ENCODE measurements at regions of chr12 and their contacts with region 1.

Region 1: GRCh38 chr12:44317651-44318126 is 481.8 kb downstream of the TMEM117 start:
- DNase-seq: peak; percentile 81
- H3K4me3 ChIP-seq: no peak overlapping the region
- H3K27ac ChIP-seq: no peak overlapping the region
- H3K4me1 ChIP-seq: peaks cover 31% of the 10 kb centered on the region
- H3K27me3 ChIP-seq: no peaks in the 10 kb centered on the region
- CTCF ChIP-seq: peak; percentile 67

Region 2: GRCh38 chr12:44296624-44297197 is 21.0 kb before region 1 on chr12:
- CTCF ChIA-PET with region 1: no interaction called
- POLR2A ChIA-PET with region 1: no interaction called
- intact Hi-C with region 1: loop called (anchors 2 kb)
- DNase-seq: no peak
- H3K4me3 ChIP-seq: no peak overlapping the region
- H3K27ac ChIP-seq: no peak overlapping the region
- H3K4me1 ChIP-seq: no peaks in the 10 kb centered on the region
- H3K27me3 ChIP-seq: no peaks in the 10 kb centered on the region
- CTCF ChIP-seq: no peak

Region 3: DNA sequence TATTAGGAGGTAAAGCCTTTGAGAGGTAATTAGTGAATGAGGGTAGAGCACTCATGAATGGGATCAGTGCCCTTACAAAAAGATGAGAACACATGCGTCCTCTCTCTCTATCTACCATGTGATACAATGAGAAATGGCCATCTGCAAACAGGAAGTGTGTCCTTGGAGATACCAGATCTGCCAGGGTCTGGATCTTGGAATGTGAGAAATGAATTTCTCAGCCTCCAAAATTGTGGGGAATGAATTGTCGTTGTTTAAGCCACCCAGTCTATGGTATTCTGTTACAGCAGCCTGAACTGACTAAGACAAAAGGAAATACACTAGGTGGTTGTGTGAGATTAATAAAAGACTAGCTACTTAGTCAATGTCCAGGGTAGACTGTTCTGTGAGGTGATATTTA is 191.8 kb after region 1 on chr12:
- CTCF ChIA-PET with region 1: no interaction called
- POLR2A ChIA-PET with region 1: no interaction called
- intact Hi-C with region 1: loop called (anchors 10 kb)
- DNase-seq: peak; percentile 42
- H3K4me3 ChIP-seq: no peak overlapping the region
- H3K27ac ChIP-seq: peak overlapping the region; percentile 7
- H3K4me1 ChIP-seq: peaks cover 56% of the 10 kb centered on the region
- H3K27me3 ChIP-seq: no peaks in the 10 kb centered on the region
- CTCF ChIP-seq: no peak

Region 4: DNA sequence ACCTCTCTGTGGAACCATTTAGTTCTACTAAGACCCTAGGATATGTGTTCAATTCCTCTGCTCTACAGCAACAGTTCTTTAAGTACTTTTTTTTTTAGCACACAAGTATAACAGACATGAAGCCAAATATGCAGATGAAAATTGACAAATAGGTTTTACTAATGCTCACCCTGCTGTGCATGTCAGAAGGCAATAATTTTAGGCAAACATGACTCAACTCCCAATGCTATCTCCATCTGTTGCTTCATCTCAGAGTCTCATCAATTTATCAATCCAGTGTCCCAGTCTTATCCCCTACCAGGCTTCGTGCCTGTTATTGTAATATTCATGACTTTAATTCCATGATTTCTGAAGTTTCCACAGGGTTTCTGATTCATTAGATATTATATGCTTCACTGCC is 675.5 kb after region 1 on chr12:
- CTCF ChIA-PET with region 1: no interaction called
- POLR2A ChIA-PET with region 1: no interaction called
- intact Hi-C with region 1: no loop called
- DNase-seq: peak; percentile 22
- H3K4me3 ChIP-seq: no peak overlapping the region
- H3K27ac ChIP-seq: no peak overlapping the region
- H3K4me1 ChIP-seq: no peaks in the 10 kb centered on the region
- H3K27me3 ChIP-seq: peaks cover 3% of the 10 kb centered on the region
- CTCF ChIP-seq: no peak

Measured in A673 (cell line).